HEK293T (cell line): ENCODE measurements at regions of chr2 and their contacts with region 1.

Region 1: DNA sequence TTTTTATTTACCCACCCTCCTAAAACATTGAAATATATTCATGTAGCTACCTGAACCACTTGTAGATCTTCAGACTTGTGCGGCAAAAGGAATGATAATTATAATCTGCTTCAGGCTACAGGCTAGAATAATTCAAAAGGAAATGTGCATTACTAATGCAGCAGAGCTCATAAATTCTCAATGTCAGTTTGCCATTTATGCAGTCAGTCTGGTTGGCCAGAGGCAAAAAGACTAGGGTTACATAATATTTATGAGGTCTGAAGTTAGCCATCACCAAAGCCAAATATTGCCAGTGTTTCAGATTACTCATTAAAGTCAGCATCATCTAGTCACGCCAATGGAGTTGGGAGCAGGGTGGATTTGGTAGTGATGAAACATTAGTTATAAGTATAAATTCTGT is 38.9 kb downstream of the METAP1D start:
- DNase-seq: peak; percentile 45

Region 2: DNA sequence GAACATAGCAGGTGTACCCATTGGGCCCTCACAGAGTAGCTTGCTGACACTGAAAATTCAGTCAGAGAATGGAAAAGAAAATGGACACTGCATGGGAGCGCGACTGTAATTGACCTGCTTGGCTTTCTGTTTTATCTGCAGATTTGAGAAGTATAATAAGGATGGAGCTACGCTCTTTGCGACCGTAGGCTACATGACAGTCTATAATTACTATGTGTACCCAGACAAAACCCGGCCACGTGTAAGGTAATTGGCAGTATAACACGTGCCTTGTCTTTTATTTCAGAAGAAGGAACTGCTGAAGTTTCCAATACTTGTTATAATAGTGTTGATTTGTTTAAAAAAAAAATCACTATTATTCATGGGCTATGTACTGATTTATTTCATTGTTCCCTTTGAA is 72.3 kb before region 1 on chr2:
- CTCF ChIA-PET with region 1: no interaction called
- POLR2A ChIA-PET with region 1: no interaction called
- DNase-seq: no peak

Region 3: GRCh38 chr2:172052000-172052983 is 13.7 kb after region 1 on chr2:
- CTCF ChIA-PET with region 1: no interaction called
- POLR2A ChIA-PET with region 1: no interaction called
- DNase-seq: no peak

Region 4: GRCh38 chr2:172084734-172085459 is 46.3 kb after region 1 on chr2:
- CTCF ChIA-PET with region 1: no interaction called
- POLR2A ChIA-PET with region 1: interaction called, 11 read pairs
- DNase-seq: peak; percentile 88